Heart right ventricle (tissue), 16 donors: ENCODE measurements at regions of chr2 and their contacts with region 1.

Region 1: GRCh38 chr2:102235491-102235890 is 48.7 kb downstream of the IL1RL2 start:
- DNase-seq: no peak
- ATAC-seq: peak in 1 of 8 donors; percentile 28
- H3K4me3 ChIP-seq: no peak overlapping the region
- H3K27ac ChIP-seq: no peak overlapping the region
- H3K4me1 ChIP-seq: peaks cover 0 to 24% (median 12%) of the 10 kb centered on the region in 9 donors
- H3K27me3 ChIP-seq: peaks cover 0 to 6% (median 0%) of the 10 kb centered on the region in 7 donors
- CTCF ChIP-seq: peak in 3 of 9 donors; percentile 18 to 40 (median 21)

Region 2: DNA sequence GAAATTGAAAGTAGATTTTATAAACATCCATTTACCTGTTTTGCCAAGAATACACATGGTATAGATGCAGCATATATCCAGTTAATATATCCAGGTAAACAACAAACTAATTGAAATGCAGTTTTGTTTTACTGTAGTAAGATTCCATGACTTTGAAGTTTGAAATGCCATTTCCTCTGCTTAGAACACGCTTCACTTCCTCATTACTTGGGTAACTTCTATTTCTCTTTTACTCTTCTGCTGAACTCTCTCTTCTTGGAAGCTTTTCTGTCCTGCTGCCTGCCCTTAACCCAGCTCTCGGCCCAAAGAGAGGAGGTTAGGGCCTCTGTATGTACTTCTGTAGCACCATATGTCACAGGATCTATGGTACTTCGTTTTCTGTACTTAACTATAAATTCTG is 62.7 kb before region 1 on chr2:
- intact Hi-C with region 1: loop called in 2 of 10 experiments (anchors 10 kb)
- DNase-seq: no peak
- ATAC-seq: no peak
- H3K4me3 ChIP-seq: no peak overlapping the region
- H3K27ac ChIP-seq: peak overlapping the region in 1 of 10 donors; percentile 36
- H3K4me1 ChIP-seq: peaks cover 0 to 7% (median 0%) of the 10 kb centered on the region in 9 donors
- H3K27me3 ChIP-seq: no peaks in the 10 kb centered on the region
- CTCF ChIP-seq: no peak

Region 3: GRCh38 chr2:102187496-102188150 is 47.9 kb before region 1 on chr2:
- intact Hi-C with region 1: loop called in 4 of 10 experiments (anchors 2 to 10 kb)
- DNase-seq: peak; percentile 62 to 65
- ATAC-seq: peak; percentile 80 to 93 (median 88)
- H3K4me3 ChIP-seq: peak overlapping the region; percentile 13 to 63 (median 53)
- H3K27ac ChIP-seq: peak overlapping the region in 7 of 10 donors; percentile 44 to 80 (median 68)
- H3K4me1 ChIP-seq: peaks cover 2 to 29% (median 8%) of the 10 kb centered on the region in 9 donors
- H3K27me3 ChIP-seq: peaks cover 0 to 28% (median 3%) of the 10 kb centered on the region in 7 donors
- CTCF ChIP-seq: peak in 7 of 9 donors; percentile 20 to 55 (median 38)